B cell (primary cell): ENCODE measurements at regions of chr17 and their contacts with region 1.

Region 1: DNA sequence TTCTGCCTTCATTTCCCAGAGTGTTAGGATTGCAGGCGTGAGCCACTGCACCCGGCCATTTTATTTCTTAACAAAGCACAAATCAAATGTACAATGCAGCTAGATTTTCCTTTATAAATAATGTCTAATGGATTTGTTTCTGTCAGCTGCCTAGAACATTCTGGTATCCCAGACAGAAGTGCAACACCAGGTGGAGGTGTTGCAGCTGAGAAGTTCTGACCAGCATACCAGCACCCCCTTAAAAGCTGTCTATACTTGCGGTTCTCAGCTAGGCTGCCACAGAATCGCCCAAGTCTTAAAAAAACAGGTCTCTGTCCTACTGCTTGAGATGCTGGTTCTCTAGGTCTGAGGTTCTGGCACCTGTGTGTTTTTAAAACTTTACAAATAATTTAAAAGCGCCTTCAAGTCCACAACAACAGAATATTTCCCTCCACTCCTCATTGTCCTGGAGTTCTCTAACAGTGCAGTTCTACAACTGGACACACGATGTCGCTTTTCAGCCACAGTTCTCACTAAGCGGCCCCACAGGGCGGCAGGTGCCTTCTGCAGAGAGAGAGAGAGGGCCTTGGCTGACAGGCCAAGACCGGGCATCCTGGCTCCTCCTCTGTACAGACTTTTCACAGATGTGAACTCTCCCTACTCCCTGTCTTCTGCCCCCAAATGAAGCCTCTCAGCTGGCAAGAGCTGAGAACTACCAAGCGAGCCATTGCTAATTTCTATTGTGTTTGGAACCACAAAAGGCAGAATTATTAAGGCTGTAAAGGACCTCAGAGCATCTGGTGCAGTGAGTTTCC is 32.6 kb upstream of the MEOX1 start:
- DNase-seq: peak; percentile 84
- ATAC-seq: peak; percentile 99
- H3K4me3 ChIP-seq: no peak overlapping the region
- H3K4me3 Mint-ChIP-seq: no peak overlapping the region
- H3K27ac ChIP-seq: no peak overlapping the region
- H3K27ac Mint-ChIP-seq: no peak overlapping the region
- H3K4me1 ChIP-seq: no peaks in the 10 kb centered on the region
- H3K4me1 Mint-ChIP-seq: no peaks in the 10 kb centered on the region
- H3K27me3 ChIP-seq: peaks cover 0 to 16% (median under 1%) of the 10 kb centered on the region in 4 experiments
- H3K27me3 Mint-ChIP-seq: peaks cover 29% of the 10 kb centered on the region
- CTCF ChIP-seq: peak; percentile 93

Region 2: DNA sequence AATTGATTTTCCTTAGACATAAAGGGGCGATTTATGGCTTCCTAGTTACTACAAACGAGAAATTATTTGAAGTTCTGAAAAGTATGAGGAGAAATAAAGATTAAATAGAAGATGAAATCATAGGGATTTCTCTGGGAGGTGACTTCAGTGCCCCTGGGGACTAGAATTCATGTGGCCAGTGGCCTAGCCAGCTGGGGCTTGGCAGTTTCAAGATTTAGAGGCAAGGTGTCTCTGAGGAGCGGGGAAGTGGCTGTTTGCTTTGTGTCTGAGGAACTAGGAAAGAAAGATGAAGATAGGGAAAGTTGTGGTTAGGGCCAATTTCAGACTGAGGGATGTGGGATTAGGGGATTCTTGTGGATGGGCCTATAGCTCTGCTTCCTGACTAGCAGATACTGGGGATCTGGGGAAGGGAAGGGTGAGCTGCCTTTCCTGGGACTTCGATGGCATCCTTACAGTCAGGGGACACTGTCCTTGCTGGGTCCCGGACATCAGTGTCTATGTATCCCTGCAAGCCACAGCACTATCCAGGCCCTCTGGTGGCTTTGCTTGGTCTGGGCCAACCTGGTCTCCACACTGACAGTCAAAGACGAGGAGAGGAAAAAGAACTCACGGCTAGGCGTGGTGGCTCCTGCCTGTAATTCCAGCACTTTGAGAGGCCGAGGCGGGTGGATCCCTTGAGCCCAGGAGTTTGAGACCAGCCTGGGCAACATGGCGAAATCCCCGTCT is 10.2 kb before region 1 on chr17:
- CTCF ChIA-PET with region 1: interaction called, 12 read pairs
- POLR2A ChIA-PET with region 1: no interaction called
- intact Hi-C with region 1: no loop called
- DNase-seq: no peak
- ATAC-seq: no peak
- H3K4me3 ChIP-seq: no peak overlapping the region
- H3K4me3 Mint-ChIP-seq: no peak overlapping the region
- H3K27ac ChIP-seq: no peak overlapping the region
- H3K27ac Mint-ChIP-seq: no peak overlapping the region
- H3K4me1 ChIP-seq: no peaks in the 10 kb centered on the region
- H3K4me1 Mint-ChIP-seq: no peaks in the 10 kb centered on the region
- H3K27me3 ChIP-seq: no peaks in the 10 kb centered on the region
- H3K27me3 Mint-ChIP-seq: peaks cover 11% of the 10 kb centered on the region
- CTCF ChIP-seq: no peak

Region 3: DNA sequence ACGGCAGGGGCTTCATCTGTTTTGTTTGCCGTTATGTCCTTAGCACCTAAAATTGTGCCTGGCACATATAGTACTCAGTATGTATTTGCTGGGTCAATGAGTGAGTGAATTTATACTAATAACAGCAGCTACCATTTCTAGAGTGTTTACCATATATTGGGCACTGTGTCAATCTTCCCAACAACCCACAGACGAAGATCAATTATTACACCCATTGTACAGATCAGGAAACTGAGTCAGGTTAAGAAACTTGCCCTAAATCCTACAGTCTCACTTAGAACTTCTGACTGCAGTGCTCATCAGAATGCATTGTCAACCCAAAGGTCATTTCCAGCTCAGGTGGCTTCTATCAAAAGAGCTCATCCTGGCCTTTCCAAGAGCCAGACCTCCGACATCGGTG is 12.0 kb after region 1 on chr17:
- CTCF ChIA-PET with region 1: interaction called, 13 read pairs
- POLR2A ChIA-PET with region 1: interaction called, 3 read pairs
- intact Hi-C with region 1: no loop called
- DNase-seq: no peak
- ATAC-seq: no peak
- H3K4me3 ChIP-seq: no peak overlapping the region
- H3K4me3 Mint-ChIP-seq: no peak overlapping the region
- H3K27ac ChIP-seq: no peak overlapping the region
- H3K27ac Mint-ChIP-seq: no peak overlapping the region
- H3K4me1 ChIP-seq: peaks cover 4% of the 10 kb centered on the region in 2 donors
- H3K4me1 Mint-ChIP-seq: peaks cover 6% of the 10 kb centered on the region
- H3K27me3 ChIP-seq: peaks cover 0 to 31% (median 3%) of the 10 kb centered on the region in 4 experiments
- H3K27me3 Mint-ChIP-seq: peaks cover 49% of the 10 kb centered on the region
- CTCF ChIP-seq: no peak

Region 4: DNA sequence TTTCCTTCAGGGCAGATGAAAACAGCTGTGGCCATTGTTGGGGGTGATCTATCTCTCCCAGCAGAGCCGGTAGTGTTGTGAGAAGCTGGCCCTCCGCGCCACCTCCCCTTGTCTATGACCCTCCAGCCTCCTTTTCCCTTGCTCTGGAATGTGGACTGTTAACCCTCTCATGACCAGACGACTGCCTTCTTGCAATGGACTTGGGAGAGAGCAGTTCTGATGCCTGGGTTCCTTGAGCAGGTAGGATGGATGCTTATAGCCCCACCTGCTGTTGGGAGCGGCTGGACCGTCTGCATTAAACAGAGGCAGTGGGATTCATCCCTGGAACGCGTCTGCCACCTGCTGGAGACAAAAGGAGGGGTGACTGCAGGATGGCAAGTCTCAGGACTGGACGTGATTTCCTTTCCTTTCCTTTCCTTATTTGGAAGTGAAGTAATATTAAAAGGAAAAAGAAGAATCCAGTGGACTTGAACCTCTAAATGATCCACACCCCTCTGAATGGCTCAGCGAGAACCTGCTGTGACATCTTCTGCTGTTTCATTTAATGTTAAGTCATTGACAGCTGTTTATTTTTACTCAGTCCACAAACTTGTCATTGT is 66.1 kb after region 1 on chr17:
- CTCF ChIA-PET with region 1: interaction called, 524 read pairs
- POLR2A ChIA-PET with region 1: interaction called, 3 read pairs
- intact Hi-C with region 1: no loop called
- DNase-seq: peak; percentile 87
- ATAC-seq: peak; percentile 98
- H3K4me3 ChIP-seq: no peak overlapping the region
- H3K4me3 Mint-ChIP-seq: no peak overlapping the region
- H3K27ac ChIP-seq: no peak overlapping the region
- H3K27ac Mint-ChIP-seq: no peak overlapping the region
- H3K4me1 ChIP-seq: peaks cover 0 to 3% of the 10 kb centered on the region in 2 donors
- H3K4me1 Mint-ChIP-seq: no peaks in the 10 kb centered on the region
- H3K27me3 ChIP-seq: peaks cover 0 to 22% (median 6%) of the 10 kb centered on the region in 4 experiments
- H3K27me3 Mint-ChIP-seq: peaks cover 24% of the 10 kb centered on the region
- CTCF ChIP-seq: peak; percentile 96

Region 5: DNA sequence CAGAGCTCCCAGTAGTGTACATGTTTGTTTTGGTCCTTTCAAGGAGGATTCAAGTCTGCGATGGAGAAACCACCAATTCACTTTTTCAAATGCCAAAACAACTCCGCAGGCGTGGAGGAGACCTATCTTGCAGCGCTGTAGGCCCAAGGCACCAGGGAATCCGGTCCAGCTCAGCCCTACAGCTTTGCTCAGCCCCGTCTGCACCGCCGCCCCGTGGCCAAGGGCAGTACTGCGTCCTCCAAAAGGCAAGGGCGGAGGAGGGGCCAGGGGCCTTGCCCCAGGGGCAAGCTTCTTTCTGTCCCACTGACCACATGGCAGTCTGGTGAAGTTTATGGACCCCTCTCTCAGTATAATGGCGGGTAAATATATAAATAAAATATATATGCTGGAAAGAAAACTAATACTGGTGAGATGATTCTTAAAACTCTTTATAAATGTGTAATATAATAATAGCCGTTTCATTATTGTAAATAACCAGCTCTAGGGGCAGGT is 152.0 kb after region 1 on chr17:
- CTCF ChIA-PET with region 1: interaction called, 22 read pairs
- POLR2A ChIA-PET with region 1: no interaction called
- intact Hi-C with region 1: no loop called
- DNase-seq: peak; percentile 71
- ATAC-seq: peak; percentile 98
- H3K4me3 ChIP-seq: no peak overlapping the region
- H3K4me3 Mint-ChIP-seq: no peak overlapping the region
- H3K27ac ChIP-seq: no peak overlapping the region
- H3K27ac Mint-ChIP-seq: no peak overlapping the region
- H3K4me1 ChIP-seq: no peaks in the 10 kb centered on the region
- H3K4me1 Mint-ChIP-seq: no peaks in the 10 kb centered on the region
- H3K27me3 ChIP-seq: peaks cover 0 to 8% (median 0%) of the 10 kb centered on the region in 4 experiments
- H3K27me3 Mint-ChIP-seq: peaks cover 28% of the 10 kb centered on the region
- CTCF ChIP-seq: peak; percentile 95